Activated CD4-positive, alpha-beta T cell treated with anti-CD3 and anti-CD28 coated beads for 36 hours (primary cell): ENCODE measurements at regions of chr9 and their contacts with region 1.

Region 1: DNA sequence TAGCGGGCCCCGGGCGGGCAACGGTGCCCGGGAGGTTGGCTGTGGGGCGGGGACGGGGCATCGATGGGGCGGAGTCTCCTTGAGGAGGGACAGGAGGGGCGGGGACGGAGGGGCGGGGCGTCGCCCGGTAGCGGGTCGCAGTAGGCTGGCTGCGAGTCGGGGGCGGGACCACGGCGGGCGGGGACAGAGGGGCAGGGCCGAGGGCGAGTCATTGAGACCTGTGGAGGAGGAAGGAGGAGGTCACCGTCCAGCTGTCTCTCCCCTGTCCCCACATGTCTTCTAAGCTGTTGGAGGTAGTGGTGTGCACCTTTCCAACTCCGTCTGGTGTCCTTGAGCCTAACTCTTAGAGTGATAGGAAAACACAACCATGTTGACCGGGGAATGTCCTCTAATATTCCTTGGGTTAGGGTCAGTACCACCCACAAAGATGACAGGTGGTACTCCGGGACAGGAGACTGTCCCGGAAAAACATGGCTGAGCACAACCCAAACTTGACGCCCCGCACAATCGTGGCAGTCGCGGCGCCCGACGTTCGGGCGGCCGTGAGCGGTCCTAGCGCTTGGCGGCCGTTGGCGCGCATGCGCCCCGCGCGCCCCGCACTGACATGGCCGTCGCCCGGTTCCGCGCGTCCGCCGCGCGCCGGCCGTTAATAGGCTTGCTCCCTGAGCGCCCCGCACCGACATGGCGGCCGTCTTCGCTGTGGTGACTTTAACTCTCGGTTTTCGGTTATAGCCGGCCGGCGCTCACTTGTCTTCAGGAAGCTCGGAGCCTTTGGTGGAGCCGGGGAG is at the starts of genes CRAT and PTPA:
- DNase-seq: peak; percentile 99
- ATAC-seq: peak; percentile 90
- H3K4me3 Mint-ChIP-seq: peak within 1 kb of the TSS; percentile 93
- H3K27ac Mint-ChIP-seq: peak within 1 kb of the TSS; percentile 94
- H3K4me1 Mint-ChIP-seq: peaks cover 38% of the 10 kb centered on the region
- H3K27me3 Mint-ChIP-seq: no peaks in the 10 kb centered on the region
- total RNA-seq, gene CRAT: 13.2 to 18.9 TPM
- total RNA-seq, gene PTPA: 71.9 to 88.0 TPM

Region 2: DNA sequence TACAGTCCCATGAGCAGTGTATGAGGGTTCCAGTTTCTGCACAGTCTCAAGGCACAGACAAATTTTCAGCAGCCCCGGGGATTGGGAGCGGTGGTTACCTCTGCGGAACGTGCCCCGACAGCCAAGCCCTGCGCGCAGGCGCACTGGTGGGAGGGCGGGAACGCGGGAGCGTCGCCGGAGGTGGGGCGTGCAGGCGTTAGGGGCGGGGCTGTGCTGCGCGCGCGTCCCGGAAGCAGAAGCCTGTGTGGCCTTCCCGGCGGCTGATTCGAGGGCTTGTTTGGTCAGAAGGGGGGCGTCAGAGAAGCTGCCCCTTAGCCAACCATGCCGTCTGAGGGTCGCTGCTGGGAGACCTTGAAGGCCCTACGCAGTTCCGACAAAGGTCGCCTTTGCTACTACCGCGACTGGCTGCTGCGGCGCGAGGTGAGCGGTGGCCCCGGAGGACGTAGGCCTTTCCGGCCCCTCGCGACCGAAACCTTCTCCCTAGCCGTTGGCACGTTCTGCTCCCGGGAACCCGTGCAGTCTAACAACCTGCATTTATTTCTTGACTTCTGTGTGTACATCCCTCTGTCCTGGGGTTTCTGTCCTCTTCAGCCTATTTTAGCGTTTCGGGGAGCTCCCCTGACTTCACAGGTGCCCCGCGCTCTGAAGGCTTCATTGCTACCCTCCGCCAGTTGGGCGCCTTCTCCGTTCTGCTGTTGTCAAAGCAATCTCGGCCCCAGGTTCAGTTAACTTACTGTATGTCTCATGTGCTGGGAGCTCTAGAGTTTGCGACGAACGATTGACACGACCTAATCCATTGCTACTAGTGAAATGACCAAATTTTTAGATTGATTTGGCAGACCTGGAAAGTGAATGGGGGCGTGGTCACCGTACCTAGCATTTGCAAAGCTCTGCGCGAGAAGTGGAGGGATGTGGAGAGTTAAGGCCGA is 606.2 kb before region 1 on chr9 and contains the start of gene GLE1:
- CTCF ChIA-PET with region 1: no interaction called
- POLR2A ChIA-PET with region 1: no interaction called
- intact Hi-C with region 1: loop called in 1 of 2 experiments (anchors 1 kb)
- DNase-seq: peak; percentile 98
- ATAC-seq: peak; percentile 99
- H3K4me3 Mint-ChIP-seq: peak within 1 kb of the TSS; percentile 95
- H3K27ac Mint-ChIP-seq: peak within 1 kb of the TSS; percentile 99
- H3K4me1 Mint-ChIP-seq: peaks cover 21% of the 10 kb centered on the region
- H3K27me3 Mint-ChIP-seq: no peaks in the 10 kb centered on the region
- total RNA-seq, gene GLE1: 52.5 to 54.4 TPM

Region 3: DNA sequence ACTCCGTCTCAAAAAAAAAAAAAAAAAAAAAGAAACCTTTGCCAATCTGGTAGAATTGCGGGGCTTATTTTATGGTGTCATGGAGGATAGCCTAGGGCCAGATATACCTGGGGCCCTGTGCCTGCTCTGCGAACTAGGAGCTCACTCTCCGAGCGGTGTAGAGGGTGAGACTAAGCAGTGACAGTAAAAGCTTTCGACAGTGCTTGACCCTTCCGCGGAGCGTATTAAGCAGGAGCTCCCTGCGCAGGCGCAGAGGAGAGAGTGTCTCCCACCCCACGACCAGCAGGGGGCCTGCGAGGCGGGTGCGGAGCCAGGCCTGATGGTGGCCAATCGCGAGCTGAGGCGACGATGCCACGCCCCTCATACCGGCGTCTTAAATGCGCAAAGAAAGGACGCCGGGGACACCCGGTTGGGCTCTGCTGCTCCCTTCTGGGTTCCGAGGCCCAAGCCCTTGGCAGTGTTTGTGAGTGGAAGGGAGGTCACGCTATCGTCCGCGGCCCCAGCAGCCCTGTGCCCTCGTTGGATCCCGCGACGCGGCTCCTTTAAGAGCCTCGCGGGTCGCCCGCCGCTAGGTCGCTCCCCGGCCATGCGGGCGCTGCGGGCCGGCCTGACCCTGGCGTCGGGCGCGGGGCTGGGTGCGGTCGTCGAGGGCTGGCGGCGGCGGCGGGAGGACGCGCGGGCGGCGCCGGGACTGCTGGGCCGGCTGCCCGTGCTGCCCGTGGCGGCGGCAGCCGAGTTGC is 292.7 kb before region 1 on chr9 and contains the start of gene ENDOG:
- CTCF ChIA-PET with region 1: no interaction called
- POLR2A ChIA-PET with region 1: no interaction called
- intact Hi-C with region 1: loop called in 1 of 2 experiments (anchors 1 kb)
- DNase-seq: peak; percentile 98
- ATAC-seq: peak; percentile 98
- H3K4me3 Mint-ChIP-seq: peak within 1 kb of the TSS; percentile 76
- H3K27ac Mint-ChIP-seq: peak within 1 kb of the TSS; percentile 80
- H3K4me1 Mint-ChIP-seq: peaks cover 13% of the 10 kb centered on the region
- H3K27me3 Mint-ChIP-seq: no peaks in the 10 kb centered on the region
- total RNA-seq, gene ENDOG: 7.3 to 9.3 TPM

Region 4: GRCh38 chr9:129036241-129036922 is 74.6 kb before region 1 on chr9 and contains the start of gene MIGA2:
- CTCF ChIA-PET with region 1: no interaction called
- POLR2A ChIA-PET with region 1: no interaction called
- intact Hi-C with region 1: loop called (anchors 1 to 2 kb)
- DNase-seq: peak; percentile 96
- ATAC-seq: peak; percentile 99
- H3K4me3 Mint-ChIP-seq: peak within 1 kb of the TSS; percentile 98
- H3K27ac Mint-ChIP-seq: peak within 1 kb of the TSS; percentile 83
- H3K4me1 Mint-ChIP-seq: peaks cover 27% of the 10 kb centered on the region
- H3K27me3 Mint-ChIP-seq: no peaks in the 10 kb centered on the region
- total RNA-seq, gene MIGA2: 15.7 to 25.8 TPM

Region 5: GRCh38 chr9:129177791-129178559 is 67.0 kb after region 1 on chr9 and contains the start of gene IER5L:
- CTCF ChIA-PET with region 1: no interaction called
- POLR2A ChIA-PET with region 1: no interaction called
- intact Hi-C with region 1: loop called in 1 of 2 experiments (anchors 1 kb)
- DNase-seq: peak; percentile 96
- ATAC-seq: peak; percentile 88
- H3K4me3 Mint-ChIP-seq: peak within 1 kb of the TSS; percentile 83
- H3K27ac Mint-ChIP-seq: peak within 1 kb of the TSS; percentile 65
- H3K4me1 Mint-ChIP-seq: peaks cover 7% of the 10 kb centered on the region
- H3K27me3 Mint-ChIP-seq: peaks cover 3% of the 10 kb centered on the region
- total RNA-seq, gene IER5L: 2.6 to 2.8 TPM

Region 6: GRCh38 chr9:129406278-129407225 is 295.6 kb after region 1 on chr9:
- CTCF ChIA-PET with region 1: no interaction called
- POLR2A ChIA-PET with region 1: no interaction called
- intact Hi-C with region 1: no loop called
- DNase-seq: no peak
- ATAC-seq: no peak
- H3K4me3 Mint-ChIP-seq: no peak overlapping the region
- H3K27ac Mint-ChIP-seq: no peak overlapping the region
- H3K4me1 Mint-ChIP-seq: peaks cover 11% of the 10 kb centered on the region
- H3K27me3 Mint-ChIP-seq: no peaks in the 10 kb centered on the region

Region 7: GRCh38 chr9:129495534-129496325 is 384.8 kb after region 1 on chr9:
- CTCF ChIA-PET with region 1: no interaction called
- POLR2A ChIA-PET with region 1: no interaction called
- intact Hi-C with region 1: loop called in 1 of 2 experiments (anchors 1 kb)
- DNase-seq: peak; percentile 92
- ATAC-seq: peak; percentile 86
- H3K4me3 Mint-ChIP-seq: peak overlapping the region; percentile 74
- H3K27ac Mint-ChIP-seq: peak overlapping the region; percentile 67
- H3K4me1 Mint-ChIP-seq: peaks cover 33% of the 10 kb centered on the region
- H3K27me3 Mint-ChIP-seq: no peaks in the 10 kb centered on the region